Right ventricle myocardium superior (tissue), 1 donor: ENCODE measurements at regions of chr12 and their contacts with region 1.

Region 1: GRCh38 chr12:7219599-7220243 is 30.2 kb downstream of the PEX5 start:
- DNase-seq: peak; percentile 60
- ATAC-seq: peak; percentile 52

Region 2: DNA sequence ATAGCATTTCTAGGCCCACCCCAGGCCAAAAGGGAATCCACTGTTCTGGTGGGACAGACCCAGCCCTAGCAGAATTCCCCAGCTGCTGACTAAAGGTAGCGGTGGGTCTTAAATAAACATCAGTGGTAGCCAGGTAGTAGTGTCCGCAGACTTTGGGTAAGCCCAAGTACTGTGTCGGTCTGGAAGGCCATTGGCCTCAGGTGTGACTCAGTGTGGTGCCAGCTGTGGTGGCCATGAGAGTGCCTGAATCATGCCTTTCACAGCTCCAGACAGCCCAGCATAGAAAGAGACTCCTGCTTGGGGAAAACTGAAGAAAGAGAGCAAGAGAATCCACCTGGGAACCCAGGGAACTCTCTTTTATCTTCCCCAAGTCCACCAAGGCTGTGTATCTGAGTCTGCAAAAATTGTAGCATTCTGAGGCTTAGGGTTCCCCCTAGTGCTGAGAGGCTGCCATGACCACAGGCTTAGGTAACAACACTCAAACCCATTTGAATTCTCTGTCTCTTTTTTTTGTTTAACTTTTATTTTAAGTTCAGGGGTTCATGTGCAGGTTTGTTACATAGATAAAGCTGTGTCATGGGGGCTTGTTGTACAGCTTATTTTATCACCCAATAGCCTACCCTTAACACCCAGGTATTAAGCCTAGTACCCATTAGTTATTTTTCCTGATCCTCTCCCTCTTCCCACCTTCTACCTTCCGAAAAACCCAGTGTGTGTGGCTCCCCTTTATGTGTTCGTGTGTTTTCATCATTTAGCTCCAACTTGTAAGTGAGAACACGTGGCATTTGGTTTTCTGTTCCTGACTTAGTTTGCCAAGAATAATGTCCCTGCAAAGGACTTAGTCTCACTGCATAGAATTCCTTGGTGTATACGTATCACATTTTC is 240.9 kb after region 1 on chr12:
- intact Hi-C with region 1: loop called (anchors 5 kb)
- DNase-seq: peak; percentile 51
- ATAC-seq: peak; percentile 80

Region 3: GRCh38 chr12:7637615-7638014 is 417.9 kb after region 1 on chr12:
- intact Hi-C with region 1: loop called (anchors 2 kb)
- DNase-seq: no peak
- ATAC-seq: no peak